HepG2 (cell line): ENCODE measurements at regions of chr9 and their contacts with region 1.

Region 1: GRCh38 chr9:108776920-108777645 is 78.7 kb downstream of the ACTL7B start:
- DNase-seq: peak; percentile 81
- ATAC-seq: peak; percentile 56
- H3K4me3 ChIP-seq: peak overlapping the region in 1 of 3 experiments; percentile 34; a peak in 1 of 6 replicates
- H3K27ac ChIP-seq: peak overlapping the region; percentile 84
- H3K4me1 ChIP-seq: peaks cover 81% of the 10 kb centered on the region
- H3K27me3 ChIP-seq: no peaks in the 10 kb centered on the region
- CTCF ChIP-seq: peak; percentile 49
- EP300 ChIP-seq: peak in 1 of 2 experiments; percentile 31; a peak in 1 of 4 replicates
- POLR2A ChIP-seq: peak in 1 of 2 experiments; percentile 55; a peak in 2 of 4 replicates
- RAD21 ChIP-seq: no peak

Region 2: GRCh38 chr9:108444400-108445358 is 332.4 kb before region 1 on chr9:
- CTCF ChIA-PET with region 1: no interaction called
- POLR2A ChIA-PET with region 1: interaction called, 3 read pairs
- in situ Hi-C with region 1: loop called (anchors 25 kb)
- intact Hi-C with region 1: loop called (anchors 5 kb)
- DNase-seq: peak; percentile 72
- ATAC-seq: no peak
- H3K4me3 ChIP-seq: peak overlapping the region in 1 of 3 experiments; percentile 7; a peak in 1 of 6 replicates
- H3K27ac ChIP-seq: peak overlapping the region; percentile 82
- H3K4me1 ChIP-seq: peaks cover 66% of the 10 kb centered on the region
- H3K27me3 ChIP-seq: no peaks in the 10 kb centered on the region
- CTCF ChIP-seq: peak; percentile 21; the same call in 1 of the 2 replicates
- EP300 ChIP-seq: no peak; a peak in 1 of 4 replicates
- POLR2A ChIP-seq: no peak
- RAD21 ChIP-seq: no peak

Region 3: GRCh38 chr9:108743901-108744371 is 33.1 kb before region 1 on chr9:
- CTCF ChIA-PET with region 1: no interaction called
- POLR2A ChIA-PET with region 1: no interaction called
- in situ Hi-C with region 1: no loop called
- intact Hi-C with region 1: loop called (anchors 1 kb)
- DNase-seq: peak; percentile 91
- ATAC-seq: peak; percentile 99
- H3K4me3 ChIP-seq: peak overlapping the region in 1 of 3 experiments; percentile 25; a peak in 2 of 6 replicates
- H3K27ac ChIP-seq: peak overlapping the region; percentile 17
- H3K4me1 ChIP-seq: peaks cover 40% of the 10 kb centered on the region
- H3K27me3 ChIP-seq: no peaks in the 10 kb centered on the region
- CTCF ChIP-seq: peak; percentile 32; the same call in 1 of the 2 replicates
- EP300 ChIP-seq: no peak
- POLR2A ChIP-seq: no peak
- RAD21 ChIP-seq: no peak

Region 4: DNA sequence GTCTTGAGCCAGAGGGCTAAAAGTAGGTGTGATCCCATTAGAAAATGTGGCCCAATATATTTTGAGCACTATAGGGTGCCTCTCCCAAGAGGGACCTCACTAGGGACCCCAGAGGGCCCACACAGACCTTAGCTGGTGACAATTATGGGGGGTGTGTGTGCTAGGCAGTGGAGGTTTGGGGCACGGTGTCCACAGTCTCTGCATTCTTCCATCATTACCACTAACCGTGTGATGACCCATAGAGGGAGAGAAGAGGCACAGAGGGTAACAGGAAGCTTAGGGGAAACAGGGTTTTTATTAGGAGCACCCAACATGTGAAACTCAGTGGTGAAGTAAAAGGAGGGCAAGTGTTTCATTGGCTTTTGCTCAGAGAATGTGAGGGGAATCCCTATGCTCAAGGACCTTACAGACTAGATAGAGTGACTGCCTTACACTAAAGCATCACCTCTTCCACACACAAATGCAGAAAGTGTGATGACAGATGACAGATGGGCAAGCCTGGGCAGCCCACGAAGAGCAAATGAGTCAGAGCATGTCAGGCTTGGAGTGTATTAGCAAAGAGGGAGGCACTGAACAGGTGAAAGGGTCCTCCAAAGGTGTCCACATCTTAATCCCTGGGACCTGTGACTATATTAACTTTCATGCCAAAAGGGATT is 82.5 kb after region 1 on chr9:
- CTCF ChIA-PET with region 1: no interaction called
- POLR2A ChIA-PET with region 1: no interaction called
- in situ Hi-C with region 1: no loop called
- intact Hi-C with region 1: loop called (anchors 10 kb)
- DNase-seq: no peak
- ATAC-seq: no peak
- H3K4me3 ChIP-seq: no peak overlapping the region
- H3K27ac ChIP-seq: no peak overlapping the region
- H3K4me1 ChIP-seq: peaks cover 20% of the 10 kb centered on the region
- H3K27me3 ChIP-seq: no peaks in the 10 kb centered on the region
- CTCF ChIP-seq: no peak
- EP300 ChIP-seq: no peak
- POLR2A ChIP-seq: no peak
- RAD21 ChIP-seq: no peak

Region 5: DNA sequence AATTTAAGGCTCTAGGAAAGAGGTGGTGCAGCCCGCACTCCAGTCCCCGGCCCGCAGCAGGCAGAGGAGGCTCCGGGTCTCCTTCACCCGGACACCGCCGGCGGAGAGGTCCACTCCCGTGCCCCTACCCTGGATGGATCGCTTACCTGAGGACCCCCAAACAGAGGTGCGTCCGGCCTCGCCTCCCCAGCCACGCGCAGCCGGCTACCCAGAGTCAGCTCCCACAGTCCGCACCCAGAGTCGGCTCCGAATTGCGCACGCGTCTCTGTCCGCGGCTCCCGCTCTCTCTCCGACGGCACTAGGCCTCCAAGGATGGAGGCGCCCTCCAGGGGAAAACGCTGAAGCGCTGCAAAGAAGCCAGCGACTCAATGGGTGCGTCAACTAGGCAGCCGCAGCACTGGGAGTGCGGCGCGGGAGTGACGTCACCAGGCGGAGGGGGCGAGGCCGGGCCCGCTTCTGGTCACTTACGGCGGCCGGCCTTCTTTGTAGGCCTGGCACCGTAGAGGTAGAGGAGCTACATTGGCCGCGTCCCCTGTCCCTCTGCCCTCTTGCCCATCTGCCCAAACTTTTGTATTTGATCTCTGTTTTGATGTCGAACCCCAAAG is 156.7 kb after region 1 on chr9 and contains the start of gene ELP1:
- CTCF ChIA-PET with region 1: no interaction called
- POLR2A ChIA-PET with region 1: no interaction called
- in situ Hi-C with region 1: no loop called
- intact Hi-C with region 1: loop called (anchors 10 kb)
- DNase-seq: peak; percentile 93
- ATAC-seq: peak; percentile 94
- H3K4me3 ChIP-seq: peak within 1 kb of the TSS; percentile 84 to 100 (median 95)
- H3K27ac ChIP-seq: peak within 1 kb of the TSS; percentile 84
- H3K4me1 ChIP-seq: peaks cover 44% of the 10 kb centered on the region
- H3K27me3 ChIP-seq: no peaks in the 10 kb centered on the region; a peak in 1 of 5 replicates
- CTCF ChIP-seq: peak; percentile 91
- EP300 ChIP-seq: no peak
- POLR2A ChIP-seq: peak; percentile 46 to 74; a peak in 3 of 4 replicates
- RAD21 ChIP-seq: peak; percentile 78
- total RNA-seq, gene ELP1: 275 and 437 TPM in 2 replicates